Posterior vena cava (tissue), 2 donors: ENCODE measurements at regions of chr10 and their contacts with region 1.

Region 1: DNA sequence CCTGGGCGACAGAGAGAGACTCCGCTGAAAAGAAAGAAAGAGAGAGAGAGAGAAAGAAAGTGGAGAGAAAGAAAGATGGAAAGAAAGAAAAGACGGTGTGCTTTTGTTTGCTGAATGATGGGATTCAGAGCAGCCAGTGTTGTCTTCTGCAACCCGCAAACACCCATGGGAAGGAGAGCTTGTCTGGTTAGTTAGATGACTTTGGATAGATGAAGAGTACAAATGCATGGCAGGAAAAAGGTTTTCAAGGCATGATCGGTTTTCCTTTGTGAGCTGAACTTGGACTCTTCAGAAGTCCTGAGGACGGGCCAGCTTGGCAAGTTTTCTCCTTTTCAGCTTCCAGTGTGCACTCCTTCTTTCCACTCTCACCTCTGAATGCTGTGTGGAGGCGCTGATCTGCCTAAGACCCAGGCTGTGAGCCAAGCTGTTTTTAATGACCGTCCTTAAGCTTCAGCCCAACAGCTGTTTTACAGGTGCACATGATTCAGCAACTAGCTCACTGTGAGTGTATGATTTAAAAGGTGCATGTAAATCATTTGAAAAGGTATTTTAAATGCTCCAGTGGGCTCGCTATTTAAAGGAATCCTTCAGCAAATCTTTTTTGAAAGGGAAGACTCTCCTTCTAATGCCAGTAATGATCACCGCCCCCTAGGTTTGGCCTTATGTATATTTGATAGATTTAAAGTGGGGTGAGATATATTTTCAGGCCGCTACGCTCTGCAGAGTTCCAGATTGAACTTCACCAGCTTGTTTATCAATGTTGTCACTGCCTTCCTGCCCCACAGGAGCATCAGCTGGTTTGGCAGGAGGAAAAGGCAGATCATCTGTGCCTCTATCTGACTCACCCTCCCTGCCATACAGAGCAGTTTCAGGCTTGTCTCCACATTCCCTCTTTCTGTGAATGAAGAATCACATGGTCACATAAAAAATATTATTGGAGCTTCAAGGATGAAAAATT is 115.0 kb downstream of the PLXDC2 start:
- DNase-seq: no peak

Region 2: DNA sequence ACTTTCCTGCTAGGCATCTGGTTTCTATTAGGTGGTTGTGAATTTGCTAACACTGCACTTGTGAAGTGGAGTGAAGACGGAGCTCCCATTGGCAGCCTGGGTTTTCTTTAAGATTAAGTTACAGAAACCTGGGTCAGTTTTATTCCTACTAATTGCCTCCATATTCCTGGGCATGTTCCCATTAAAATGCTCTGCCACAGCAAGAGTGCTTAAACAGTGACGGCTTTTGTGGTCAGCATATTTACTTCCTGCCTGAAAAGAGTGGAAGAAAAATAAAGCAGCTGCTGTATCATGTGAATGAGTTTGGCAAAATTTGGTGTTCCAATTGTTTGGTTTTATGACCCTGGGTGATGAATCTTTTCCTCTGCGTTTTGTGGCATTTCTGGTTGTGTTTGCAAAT is 211.9 kb before region 1 on chr10:
- intact Hi-C with region 1: no loop called
- DNase-seq: no peak

Region 3: GRCh38 chr10:19979628-19980027 is 48.4 kb after region 1 on chr10:
- intact Hi-C with region 1: loop called in 1 of 2 experiments (anchors 10 kb)
- DNase-seq: no peak